Activated B cell treated with CpG ODN at 0.5 μM for 24 hours (primary cell): ENCODE measurements at regions of chr17 and their contacts with region 1.

Region 1: GRCh38 chr17:82716203-82717010 is at the start of gene FN3KRP:
- DNase-seq: peak; percentile 78
- ATAC-seq: peak; percentile 95
- H3K4me3 Mint-ChIP-seq: peak within 1 kb of the TSS; percentile 96
- H3K27ac Mint-ChIP-seq: peak within 1 kb of the TSS; percentile 87
- H3K4me1 Mint-ChIP-seq: peaks cover 22% of the 10 kb centered on the region
- H3K27me3 Mint-ChIP-seq: no peaks in the 10 kb centered on the region
- CTCF ChIP-seq: no peak
- total RNA-seq, gene FN3KRP: 26.7 and 28.5 TPM in 2 replicates

Region 2: DNA sequence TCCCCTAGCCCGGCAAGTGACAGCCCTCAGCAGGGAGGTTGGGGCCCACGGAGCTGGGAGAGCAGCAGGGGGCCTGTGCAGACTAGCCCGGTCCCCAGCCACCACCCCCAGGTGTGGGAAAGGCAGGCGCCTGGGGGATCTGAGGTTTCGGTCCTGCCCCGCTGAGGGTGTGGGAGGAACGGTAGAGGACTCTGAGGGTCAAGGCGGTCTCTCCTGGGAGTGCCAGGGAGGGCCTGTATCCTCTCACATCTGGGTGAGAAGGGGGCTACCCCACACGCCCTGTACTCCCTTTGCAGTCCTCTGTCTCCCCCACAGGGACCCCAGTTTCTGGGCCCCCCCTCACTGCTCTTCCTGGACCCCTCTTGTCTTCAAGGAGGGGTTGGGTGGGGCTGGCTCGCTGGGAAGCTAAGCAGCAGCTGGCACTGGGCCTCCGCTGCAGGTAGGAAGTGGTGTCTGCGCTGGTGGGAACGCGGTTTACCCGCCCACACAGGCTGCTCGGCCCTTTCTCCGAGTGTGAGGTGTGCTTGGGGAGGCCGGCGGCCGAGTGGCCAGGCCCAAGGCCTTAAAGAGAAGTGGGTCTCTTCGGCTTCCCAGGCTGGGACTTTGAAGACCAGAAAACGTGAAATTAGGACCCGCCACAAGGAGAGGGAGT is 414.4 kb before region 1 on chr17:
- CTCF ChIA-PET with region 1: no interaction called
- POLR2A ChIA-PET with region 1: no interaction called
- intact Hi-C with region 1: no loop called
- DNase-seq: peak; percentile 47
- ATAC-seq: no peak
- H3K4me3 Mint-ChIP-seq: peak overlapping the region; percentile 35
- H3K27ac Mint-ChIP-seq: peak overlapping the region; percentile 30
- H3K4me1 Mint-ChIP-seq: peaks cover 56% of the 10 kb centered on the region
- H3K27me3 Mint-ChIP-seq: no peaks in the 10 kb centered on the region
- CTCF ChIP-seq: no peak

Region 3: DNA sequence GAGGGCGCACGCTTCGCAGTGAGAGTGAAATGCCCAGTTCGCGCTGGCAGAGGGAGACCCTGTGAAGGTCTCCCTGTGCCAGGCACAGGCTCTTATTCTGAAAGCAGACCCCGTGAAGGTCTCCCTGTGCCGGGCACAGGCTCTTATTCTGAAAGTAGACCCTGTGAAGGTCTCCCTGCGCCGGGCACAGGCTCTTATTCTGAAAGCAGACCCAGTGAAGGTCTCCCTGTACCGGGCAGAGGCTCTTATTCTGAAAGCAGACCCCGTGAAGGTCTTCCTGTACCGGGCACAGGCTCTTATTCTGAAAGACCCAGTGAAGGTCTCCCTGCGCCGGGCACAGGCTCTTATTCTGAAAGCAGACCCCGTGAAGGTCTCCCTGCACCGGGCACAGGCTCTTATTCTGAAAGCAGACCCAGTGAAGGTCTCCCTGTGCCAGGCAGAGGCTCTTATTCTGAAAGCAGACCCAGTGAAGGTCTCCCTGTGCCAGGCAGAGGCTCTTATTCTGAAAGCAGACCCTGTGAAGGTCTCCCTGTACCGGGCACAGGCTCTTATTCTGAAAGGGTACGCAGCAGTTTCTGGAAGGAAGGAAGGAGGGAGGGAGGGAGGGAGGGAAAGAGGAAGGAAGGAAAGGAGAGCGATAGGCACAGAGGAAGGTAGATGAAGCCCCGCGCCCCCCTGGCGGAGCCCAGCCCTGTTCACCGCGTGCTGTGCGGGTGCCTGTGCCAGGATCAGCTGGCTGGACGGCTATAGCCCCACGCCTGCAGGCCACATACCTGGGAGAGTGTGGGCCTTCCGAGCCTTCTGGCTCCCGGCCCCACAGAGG is 123.4 kb before region 1 on chr17:
- CTCF ChIA-PET with region 1: no interaction called
- POLR2A ChIA-PET with region 1: no interaction called
- intact Hi-C with region 1: loop called (anchors 1 kb)
- DNase-seq: peak; percentile 43
- ATAC-seq: peak; percentile 61
- H3K4me3 Mint-ChIP-seq: peak overlapping the region; percentile 72
- H3K27ac Mint-ChIP-seq: peak overlapping the region; percentile 85
- H3K4me1 Mint-ChIP-seq: peaks cover 51% of the 10 kb centered on the region
- H3K27me3 Mint-ChIP-seq: no peaks in the 10 kb centered on the region
- CTCF ChIP-seq: no peak

Region 4: DNA sequence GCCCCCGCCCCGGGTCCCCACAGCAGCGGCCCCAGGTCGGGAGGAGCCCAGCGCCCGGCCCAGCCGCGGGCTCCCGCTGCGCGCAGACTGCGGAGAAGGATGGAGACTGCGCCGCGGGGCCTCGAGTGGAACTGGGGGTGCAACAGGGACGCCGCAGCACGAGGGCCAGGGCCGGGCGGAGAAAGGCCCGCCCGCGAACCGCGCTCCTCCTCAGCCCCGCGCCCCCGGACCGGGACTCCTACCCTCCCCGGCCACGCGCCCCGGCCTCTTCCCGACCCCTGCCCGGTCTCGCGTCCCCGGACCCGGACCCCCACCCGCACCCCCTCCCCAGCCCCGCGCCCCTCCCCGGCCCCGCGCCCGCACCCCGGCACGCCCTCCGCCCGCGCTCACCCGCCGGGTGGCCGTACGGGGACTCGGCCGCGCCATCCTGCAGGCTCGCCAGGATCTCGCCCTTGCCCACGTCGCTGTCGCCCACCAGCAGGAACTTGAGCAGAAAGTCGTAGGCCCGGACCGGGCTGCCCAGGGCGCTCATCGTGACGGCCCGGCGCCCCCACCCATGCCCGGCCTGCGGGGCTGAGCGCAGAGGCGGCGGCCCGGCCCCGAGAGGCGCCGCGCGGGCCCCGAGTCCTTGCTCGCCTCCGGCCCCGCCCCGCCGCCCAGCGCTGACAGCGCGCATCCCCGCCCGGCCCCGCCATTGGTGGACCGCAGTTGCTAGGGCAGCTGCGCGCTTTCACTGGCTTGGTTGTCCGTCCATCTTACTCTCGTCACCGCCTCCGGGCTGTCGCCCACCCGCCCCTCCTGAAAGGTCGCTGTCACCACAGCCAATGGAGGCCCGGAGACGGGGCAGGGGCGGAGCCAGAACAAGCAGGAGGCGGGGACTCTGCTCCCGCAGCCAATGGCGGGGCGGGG is 18.1 kb before region 1 on chr17 and contains the start of gene RAB40B:
- CTCF ChIA-PET with region 1: no interaction called
- POLR2A ChIA-PET with region 1: interaction called, 3 read pairs
- intact Hi-C with region 1: loop called (anchors 1 kb)
- DNase-seq: peak; percentile 94
- ATAC-seq: peak; percentile 98
- H3K4me3 Mint-ChIP-seq: peak within 1 kb of the TSS; percentile 82
- H3K27ac Mint-ChIP-seq: no peak within 1 kb of the TSS
- H3K4me1 Mint-ChIP-seq: peaks cover 16% of the 10 kb centered on the region
- H3K27me3 Mint-ChIP-seq: peaks cover 4% of the 10 kb centered on the region
- CTCF ChIP-seq: no peak
- total RNA-seq, gene RAB40B: 2.0 and 2.6 TPM in 2 replicates

Region 5: GRCh38 chr17:82751571-82752370 is 35.4 kb after region 1 on chr17 and contains the start of gene TBCD:
- CTCF ChIA-PET with region 1: no interaction called
- POLR2A ChIA-PET with region 1: interaction called, 9 read pairs
- intact Hi-C with region 1: loop called (anchors 1 kb)
- DNase-seq: peak; percentile 86
- ATAC-seq: peak; percentile 88
- H3K4me3 Mint-ChIP-seq: peak within 1 kb of the TSS; percentile 84
- H3K27ac Mint-ChIP-seq: no peak within 1 kb of the TSS
- H3K4me1 Mint-ChIP-seq: peaks cover 22% of the 10 kb centered on the region
- H3K27me3 Mint-ChIP-seq: no peaks in the 10 kb centered on the region
- CTCF ChIP-seq: no peak
- total RNA-seq, gene TBCD: 49.9 and 50.9 TPM in 2 replicates